GM12878 (cell line): ENCODE measurements at regions of chr6 and their contacts with region 1.

Region 1: DNA sequence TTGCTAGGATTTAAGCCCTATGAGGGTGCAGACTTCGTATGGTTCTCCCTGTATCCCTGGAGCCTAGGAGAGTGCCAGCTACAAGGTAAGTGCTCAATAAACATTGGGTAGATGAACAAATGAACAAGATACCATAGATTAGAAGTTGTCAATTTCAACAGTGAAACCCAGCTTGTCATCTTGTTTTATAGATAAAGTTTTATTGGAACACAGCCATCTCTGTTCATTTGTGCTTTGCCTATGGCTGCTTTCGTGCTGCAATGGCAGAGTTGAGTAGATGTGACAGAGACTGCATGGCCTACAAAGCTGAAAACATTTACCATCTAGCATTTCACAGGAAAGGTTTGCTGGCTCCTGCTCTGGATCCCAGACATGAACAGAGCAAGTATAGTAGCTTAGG is 5.6 kb downstream of the DAAM2 start:
- DNase-seq: no peak
- ATAC-seq: no peak
- H3K4me3 ChIP-seq: no peak overlapping the region
- H3K27ac ChIP-seq: no peak overlapping the region
- H3K4me1 ChIP-seq: no peaks in the 10 kb centered on the region
- H3K27me3 ChIP-seq: peaks cover 0 to 2% of the 10 kb centered on the region in 2 experiments; a peak in 3 of 4 replicates
- CTCF ChIP-seq: no peak
- EP300 ChIP-seq: no peak
- POLR2A ChIP-seq: no peak
- RAD21 ChIP-seq: no peak

Region 2: DNA sequence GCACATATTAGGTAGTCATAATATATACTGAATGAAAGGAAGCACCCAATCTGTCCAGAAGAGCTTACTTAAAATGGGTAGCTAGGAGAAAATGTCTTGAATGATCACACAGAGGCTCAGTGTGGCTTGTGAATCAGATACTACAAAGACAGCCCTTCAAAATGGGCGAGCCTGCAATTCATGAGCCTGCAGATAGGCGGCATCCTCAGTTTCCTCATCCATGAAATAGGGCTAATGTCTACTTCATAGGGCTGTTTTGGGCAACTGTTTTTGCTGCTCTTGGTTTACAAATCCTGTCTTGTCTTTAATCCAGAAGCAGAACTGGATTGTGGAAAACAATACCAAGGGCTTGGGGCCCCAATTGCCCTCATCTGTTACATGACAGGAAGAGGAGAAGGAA is 345.9 kb before region 1 on chr6:
- CTCF ChIA-PET with region 1: interaction called, 10 read pairs
- POLR2A ChIA-PET with region 1: no interaction called
- RAD21 ChIA-PET with region 1: no interaction called
- SMC1A ChIA-PET with region 1: no interaction called
- in situ Hi-C with region 1: no loop called
- intact Hi-C with region 1: no loop called
- DNase-seq: no peak
- ATAC-seq: peak; percentile 76
- H3K4me3 ChIP-seq: no peak overlapping the region
- H3K27ac ChIP-seq: no peak overlapping the region
- H3K4me1 ChIP-seq: no peaks in the 10 kb centered on the region
- H3K27me3 ChIP-seq: no peaks in the 10 kb centered on the region
- CTCF ChIP-seq: peak; percentile 40 to 66 (median 60)
- EP300 ChIP-seq: no peak
- POLR2A ChIP-seq: no peak
- RAD21 ChIP-seq: peak; percentile 24; the same call in 1 of the 2 replicates

Region 3: GRCh38 chr6:39859025-39859424 is 61.3 kb after region 1 on chr6:
- CTCF ChIA-PET with region 1: no interaction called
- POLR2A ChIA-PET with region 1: no interaction called
- RAD21 ChIA-PET with region 1: no interaction called
- SMC1A ChIA-PET with region 1: no interaction called
- in situ Hi-C with region 1: no loop called
- intact Hi-C with region 1: no loop called
- DNase-seq: no peak
- ATAC-seq: no peak
- H3K4me3 ChIP-seq: no peak overlapping the region
- H3K27ac ChIP-seq: no peak overlapping the region
- H3K4me1 ChIP-seq: no peaks in the 10 kb centered on the region
- H3K27me3 ChIP-seq: no peaks in the 10 kb centered on the region; a peak in 2 of 4 replicates
- CTCF ChIP-seq: no peak
- EP300 ChIP-seq: no peak
- POLR2A ChIP-seq: no peak
- RAD21 ChIP-seq: no peak

Region 4: GRCh38 chr6:39876826-39877225 is 79.1 kb after region 1 on chr6:
- CTCF ChIA-PET with region 1: no interaction called
- POLR2A ChIA-PET with region 1: no interaction called
- RAD21 ChIA-PET with region 1: no interaction called
- SMC1A ChIA-PET with region 1: no interaction called
- in situ Hi-C with region 1: no loop called
- intact Hi-C with region 1: no loop called
- DNase-seq: no peak
- ATAC-seq: no peak
- H3K4me3 ChIP-seq: no peak overlapping the region
- H3K27ac ChIP-seq: no peak overlapping the region
- H3K4me1 ChIP-seq: no peaks in the 10 kb centered on the region
- H3K27me3 ChIP-seq: no peaks in the 10 kb centered on the region; a peak in 1 of 4 replicates
- CTCF ChIP-seq: no peak
- EP300 ChIP-seq: no peak
- POLR2A ChIP-seq: no peak
- RAD21 ChIP-seq: no peak